Posterior cingulate gyrus (tissue), 11 donors: ENCODE measurements at regions of chr6 and their contacts with region 1.

Region 1: GRCh38 chr6:7243179-7243981 is 69.6 kb downstream of the SSR1 start:
- DNase-seq: peak in 4 of 10 donors; percentile 5 to 54 (median 36)

Region 2: GRCh38 chr6:6676910-6677441 is 566.4 kb before region 1 on chr6:
- intact Hi-C with region 1: loop called (anchors 1 kb)
- DNase-seq: peak; percentile 39 to 96 (median 86)

Region 3: GRCh38 chr6:6724539-6725467 is 518.6 kb before region 1 on chr6:
- intact Hi-C with region 1: loop called (anchors 2 kb)
- DNase-seq: peak in 8 of 10 donors; percentile 52 to 92 (median 62)

Region 4: GRCh38 chr6:7324520-7324919 is 81.1 kb after region 1 on chr6:
- intact Hi-C with region 1: no loop called
- DNase-seq: peak in 2 of 10 donors; percentile 8 to 59